Left lung (tissue), 14 donors: ENCODE measurements at regions of chr1 and their contacts with region 1.

Region 1: GRCh38 chr1:225652729-225653462 is at the start of gene ENAH:
- DNase-seq: peak; percentile 78 to 92 (median 85)
- ATAC-seq: peak; percentile 88
- H3K4me3 ChIP-seq: peak within 1 kb of the TSS; percentile 68 to 90
- H3K27ac ChIP-seq: peak within 1 kb of the TSS; percentile 85 to 95
- H3K4me1 ChIP-seq: peaks cover 14 to 25% of the 10 kb centered on the region in 2 donors
- H3K27me3 ChIP-seq: peaks cover 0 to 59% of the 10 kb centered on the region in 2 donors
- CTCF ChIP-seq: no peak
- polyA plus RNA-seq, gene ENAH: 198 to 255 (median 248) TPM

Region 2: DNA sequence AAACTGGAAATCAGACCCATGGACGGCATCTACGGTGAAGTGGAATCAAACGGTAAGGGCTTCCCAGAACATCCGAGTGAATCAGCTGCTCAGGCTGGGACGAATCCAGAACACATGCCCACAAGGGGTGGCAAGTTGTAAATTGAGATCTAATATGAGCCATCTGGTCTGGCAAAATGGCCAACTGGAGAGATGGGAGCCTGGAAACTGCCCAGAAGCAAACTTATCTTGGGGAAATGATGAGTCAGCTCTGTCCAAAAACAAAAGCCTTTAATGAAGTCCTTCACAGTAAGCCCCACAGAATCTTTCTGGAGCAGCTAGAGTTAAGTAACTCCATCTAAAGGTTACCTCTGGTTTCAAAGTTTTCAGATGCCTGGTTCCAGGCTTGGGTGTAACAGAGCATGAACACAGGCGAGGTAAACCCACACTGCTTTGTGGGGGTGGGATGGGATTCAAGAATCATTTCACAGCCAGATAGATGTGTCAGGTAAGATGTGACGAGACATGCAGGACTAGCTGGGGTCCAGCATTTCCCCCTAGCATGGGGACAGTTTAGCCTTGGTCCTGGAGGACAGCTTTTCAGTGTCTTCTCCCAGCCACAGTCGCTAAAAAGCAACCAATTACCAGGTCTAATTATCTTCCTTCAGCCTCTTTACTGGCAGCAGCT is 114.2 kb after region 1 on chr1:
- intact Hi-C with region 1: loop called in 1 of 2 experiments (anchors 10 kb)
- DNase-seq: peak in 1 of 4 donors; percentile 78
- ATAC-seq: peak; percentile 26
- H3K4me3 ChIP-seq: no peak overlapping the region
- H3K27ac ChIP-seq: peak overlapping the region; percentile 65 to 73
- H3K4me1 ChIP-seq: peaks cover 26 to 39% of the 10 kb centered on the region in 2 donors
- H3K27me3 ChIP-seq: no peaks in the 10 kb centered on the region
- CTCF ChIP-seq: no peak

Region 3: GRCh38 chr1:225834417-225835329 is 181.8 kb after region 1 on chr1:
- intact Hi-C with region 1: no loop called
- DNase-seq: peak in 2 of 4 donors; percentile 87 to 91
- ATAC-seq: peak; percentile 71
- H3K4me3 ChIP-seq: no peak overlapping the region
- H3K27ac ChIP-seq: peak overlapping the region; percentile 11 to 18
- H3K4me1 ChIP-seq: peaks cover 3% of the 10 kb centered on the region in 2 donors
- H3K27me3 ChIP-seq: no peaks in the 10 kb centered on the region
- CTCF ChIP-seq: no peak